ENCODE measurements at regions of chr7 and their contacts with region 1.

Region 1: GRCh38 chr7:18495412-18496340 is at the start of gene HDAC9:
- DNase-seq: no peak
- H3K4me3 Mint-ChIP-seq: peak within 1 kb of the TSS; percentile 73
- H3K27ac Mint-ChIP-seq: peak within 1 kb of the TSS; percentile 84
- H3K4me1 Mint-ChIP-seq: peaks cover 17% of the 10 kb centered on the region
- H3K27me3 Mint-ChIP-seq: peaks cover 1% of the 10 kb centered on the region
- total RNA-seq, gene HDAC9: 2.9 and 3.0 TPM in 2 replicates

Region 2: DNA sequence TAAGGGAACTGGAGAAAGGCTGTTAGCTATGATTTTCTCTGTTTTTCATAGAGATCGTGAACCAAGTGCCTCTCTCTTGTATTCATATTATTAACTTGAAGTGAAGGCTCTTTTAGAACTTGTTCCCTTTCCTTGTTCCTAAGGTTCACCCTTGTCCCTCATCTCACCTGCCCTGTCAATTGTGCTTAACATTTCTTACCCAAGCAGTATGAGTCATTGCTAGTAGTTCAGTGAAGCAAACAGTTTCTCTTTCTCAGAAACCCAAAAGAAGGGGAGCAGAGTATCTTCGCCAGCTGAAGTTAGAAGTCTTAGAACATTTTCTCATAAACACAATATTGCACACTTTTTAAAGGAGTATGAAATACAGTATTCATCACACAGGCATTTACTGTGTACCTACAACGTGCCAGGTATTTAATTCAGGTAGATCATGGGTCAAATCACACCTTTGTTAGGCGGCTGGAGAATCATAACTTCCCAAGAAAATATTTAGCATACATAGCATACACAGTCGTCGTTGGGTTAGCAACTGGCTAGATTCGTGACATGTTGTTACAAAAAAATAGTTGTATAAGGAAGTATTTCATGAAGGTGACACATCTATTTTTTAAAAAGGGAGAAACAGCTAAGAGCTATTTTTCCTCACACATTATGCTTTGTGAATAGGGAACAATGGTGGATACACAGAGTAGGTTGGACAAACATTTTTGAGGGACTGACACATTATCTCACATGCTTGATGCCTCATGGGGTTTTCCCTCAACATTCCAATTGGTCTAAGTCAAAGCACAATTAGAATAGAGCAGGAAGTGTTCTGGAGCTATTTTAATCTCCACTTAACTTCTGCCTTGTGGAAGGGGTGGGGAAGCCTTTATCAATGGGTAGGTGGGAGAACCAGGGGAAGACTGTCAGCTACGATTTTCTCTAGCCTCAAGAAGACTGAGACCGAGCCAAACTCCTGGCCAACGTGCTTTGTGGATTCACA is 13.1 kb after region 1 on chr7:
- intact Hi-C with region 1: loop called (anchors 1 kb)
- DNase-seq: no peak
- H3K4me3 Mint-ChIP-seq: peak overlapping the region; percentile 51
- H3K27ac Mint-ChIP-seq: peak overlapping the region; percentile 78
- H3K4me1 Mint-ChIP-seq: peaks cover 7% of the 10 kb centered on the region
- H3K27me3 Mint-ChIP-seq: no peaks in the 10 kb centered on the region

Region 3: GRCh38 chr7:18521945-18522566 is 26.4 kb after region 1 on chr7:
- intact Hi-C with region 1: loop called (anchors 1 kb)
- DNase-seq: no peak
- H3K4me3 Mint-ChIP-seq: no peak overlapping the region
- H3K27ac Mint-ChIP-seq: peak overlapping the region; percentile 17
- H3K4me1 Mint-ChIP-seq: no peaks in the 10 kb centered on the region
- H3K27me3 Mint-ChIP-seq: no peaks in the 10 kb centered on the region

Region 4: DNA sequence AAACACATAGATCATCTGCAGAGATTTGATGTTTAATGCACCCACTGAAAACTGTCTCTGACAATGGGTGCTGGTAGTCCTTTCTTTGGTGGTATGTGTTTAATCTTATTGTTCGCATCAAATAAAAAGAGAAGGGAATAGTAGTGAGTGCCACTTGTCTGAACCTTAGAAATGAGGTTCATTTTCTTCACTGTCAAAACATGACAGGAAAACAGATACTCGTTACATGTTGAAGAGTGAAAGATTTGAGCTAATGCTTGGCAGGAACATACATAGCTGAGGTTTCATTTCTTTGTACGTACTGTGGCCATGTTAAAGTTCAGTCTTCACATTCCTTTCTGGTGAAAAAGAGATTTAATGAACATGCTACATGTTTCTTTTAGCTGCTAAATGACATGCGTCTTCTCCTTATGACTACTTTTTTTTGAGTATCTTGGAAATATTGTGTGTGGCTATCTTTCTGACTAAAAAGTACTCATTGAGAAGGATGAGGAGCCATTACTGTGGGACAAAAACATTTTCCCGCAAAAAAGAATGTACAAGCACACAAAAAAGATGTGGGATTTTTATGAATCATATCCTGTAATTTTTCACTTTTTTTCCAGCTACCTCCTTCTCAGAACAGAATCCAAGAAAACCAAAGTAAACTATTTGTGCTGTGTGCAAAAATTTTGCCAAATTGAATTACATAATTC is 513.7 kb after region 1 on chr7:
- intact Hi-C with region 1: no loop called
- DNase-seq: no peak
- H3K4me3 Mint-ChIP-seq: no peak overlapping the region
- H3K27ac Mint-ChIP-seq: no peak overlapping the region
- H3K4me1 Mint-ChIP-seq: no peaks in the 10 kb centered on the region
- H3K27me3 Mint-ChIP-seq: no peaks in the 10 kb centered on the region

Measured in activated CD4-positive, alpha-beta T cell treated with anti-CD3 and anti-CD28 coated beads, Interleukin-2, amount 10 ng/mL, durations not matched to agents 24 days and 14 days (primary cell).